CD8-positive, alpha-beta T cell (primary cell): ENCODE measurements at regions of chr6 and their contacts with region 1.

Region 1: GRCh38 chr6:42984001-42984923 is at the start of gene PPP2R5D:
- DNase-seq: peak; percentile 93 to 99 (median 96)
- ATAC-seq: peak; percentile 93
- H3K4me3 ChIP-seq: peak within 1 kb of the TSS; percentile 81 to 86
- H3K4me3 Mint-ChIP-seq: peak within 1 kb of the TSS; percentile 94
- H3K27ac ChIP-seq: peak within 1 kb of the TSS; percentile 78 to 86
- H3K27ac Mint-ChIP-seq: peak within 1 kb of the TSS; percentile 95
- H3K4me1 ChIP-seq: peaks cover 44% of the 10 kb centered on the region
- H3K4me1 Mint-ChIP-seq: peaks cover 62% of the 10 kb centered on the region
- H3K27me3 ChIP-seq: no peaks in the 10 kb centered on the region
- H3K27me3 Mint-ChIP-seq: no peaks in the 10 kb centered on the region
- CTCF ChIP-seq: no peak
- total RNA-seq, gene PPP2R5D: 14.1 to 19.5 TPM

Region 2: DNA sequence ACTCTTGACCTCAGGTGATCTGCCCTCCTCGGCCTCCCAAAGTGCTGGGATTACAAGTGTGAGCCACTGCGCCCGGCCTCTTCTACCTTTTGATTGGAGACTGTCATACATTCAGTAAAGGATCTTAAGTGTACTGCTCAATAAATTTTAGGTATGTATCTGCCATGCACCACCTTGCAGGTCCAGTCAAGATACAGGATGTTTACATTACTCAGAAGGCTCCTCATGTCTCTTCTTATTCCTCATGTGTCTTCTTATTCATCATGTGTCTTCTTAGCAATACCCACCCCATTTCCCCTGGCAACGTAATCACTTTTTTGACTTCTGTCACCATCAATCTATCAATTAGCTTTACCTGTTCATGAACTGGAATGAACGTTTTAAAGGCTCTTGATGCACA is 21.6 kb after region 1 on chr6:
- CTCF ChIA-PET with region 1: interaction called, 3 read pairs
- POLR2A ChIA-PET with region 1: interaction called, 17 read pairs
- intact Hi-C with region 1: no loop called
- DNase-seq: no peak
- ATAC-seq: no peak
- H3K4me3 ChIP-seq: no peak overlapping the region
- H3K4me3 Mint-ChIP-seq: no peak overlapping the region
- H3K27ac ChIP-seq: no peak overlapping the region
- H3K27ac Mint-ChIP-seq: no peak overlapping the region
- H3K4me1 ChIP-seq: no peaks in the 10 kb centered on the region
- H3K4me1 Mint-ChIP-seq: peaks cover 3% of the 10 kb centered on the region
- H3K27me3 ChIP-seq: no peaks in the 10 kb centered on the region
- H3K27me3 Mint-ChIP-seq: no peaks in the 10 kb centered on the region
- CTCF ChIP-seq: no peak

Region 3: DNA sequence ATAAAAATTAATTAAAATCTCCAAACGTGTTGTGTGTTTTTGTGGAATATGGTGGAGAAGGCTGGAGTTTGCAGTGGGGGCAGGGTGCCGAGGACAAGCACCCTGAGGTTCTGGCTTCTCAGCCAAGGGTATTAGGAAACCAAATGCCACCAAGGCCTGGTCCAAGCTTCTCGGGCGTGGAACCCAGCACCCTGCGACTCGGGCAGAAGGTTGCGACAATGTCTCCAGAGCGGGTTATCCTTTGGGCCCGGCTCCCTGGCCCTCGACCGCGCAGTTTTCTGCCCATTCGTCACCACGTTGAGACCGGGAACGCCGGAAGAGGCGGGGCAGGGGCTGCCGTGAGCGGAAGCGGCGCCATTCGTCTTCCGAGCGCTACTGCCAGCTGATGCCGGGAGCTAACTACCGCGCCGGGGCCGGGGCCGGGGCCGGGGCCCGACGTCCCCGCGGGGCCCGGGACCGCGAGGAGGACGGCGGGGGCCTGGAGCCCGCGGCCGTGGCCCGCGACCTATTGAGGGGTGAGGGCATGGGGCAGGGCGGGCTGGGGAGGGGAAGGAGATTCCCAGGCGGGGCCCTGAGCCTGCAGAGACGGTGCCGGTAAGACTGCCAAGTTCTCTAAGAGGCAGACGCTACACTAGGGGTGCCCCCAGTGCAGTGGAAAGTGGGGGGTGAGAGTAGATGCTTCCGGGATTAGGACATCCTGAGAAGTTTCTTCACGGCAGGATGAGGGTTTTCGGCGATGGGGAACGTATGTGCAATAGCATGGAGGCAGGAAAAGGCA is 37.2 kb after region 1 on chr6 and contains the start of gene RRP36:
- CTCF ChIA-PET with region 1: no interaction called
- POLR2A ChIA-PET with region 1: interaction called, 15 read pairs
- intact Hi-C with region 1: no loop called
- DNase-seq: peak in 8 of 9 experiments; percentile 54 to 81 (median 72)
- ATAC-seq: peak; percentile 78
- H3K4me3 ChIP-seq: peak within 1 kb of the TSS; percentile 93 to 94
- H3K4me3 Mint-ChIP-seq: peak within 1 kb of the TSS; percentile 99
- H3K27ac ChIP-seq: peak within 1 kb of the TSS; percentile 78 to 83
- H3K27ac Mint-ChIP-seq: peak within 1 kb of the TSS; percentile 96
- H3K4me1 ChIP-seq: peaks cover 21% of the 10 kb centered on the region
- H3K4me1 Mint-ChIP-seq: peaks cover 44% of the 10 kb centered on the region
- H3K27me3 ChIP-seq: no peaks in the 10 kb centered on the region
- H3K27me3 Mint-ChIP-seq: no peaks in the 10 kb centered on the region
- CTCF ChIP-seq: no peak
- total RNA-seq, gene RRP36: 20.1 to 20.2 TPM

Region 4: DNA sequence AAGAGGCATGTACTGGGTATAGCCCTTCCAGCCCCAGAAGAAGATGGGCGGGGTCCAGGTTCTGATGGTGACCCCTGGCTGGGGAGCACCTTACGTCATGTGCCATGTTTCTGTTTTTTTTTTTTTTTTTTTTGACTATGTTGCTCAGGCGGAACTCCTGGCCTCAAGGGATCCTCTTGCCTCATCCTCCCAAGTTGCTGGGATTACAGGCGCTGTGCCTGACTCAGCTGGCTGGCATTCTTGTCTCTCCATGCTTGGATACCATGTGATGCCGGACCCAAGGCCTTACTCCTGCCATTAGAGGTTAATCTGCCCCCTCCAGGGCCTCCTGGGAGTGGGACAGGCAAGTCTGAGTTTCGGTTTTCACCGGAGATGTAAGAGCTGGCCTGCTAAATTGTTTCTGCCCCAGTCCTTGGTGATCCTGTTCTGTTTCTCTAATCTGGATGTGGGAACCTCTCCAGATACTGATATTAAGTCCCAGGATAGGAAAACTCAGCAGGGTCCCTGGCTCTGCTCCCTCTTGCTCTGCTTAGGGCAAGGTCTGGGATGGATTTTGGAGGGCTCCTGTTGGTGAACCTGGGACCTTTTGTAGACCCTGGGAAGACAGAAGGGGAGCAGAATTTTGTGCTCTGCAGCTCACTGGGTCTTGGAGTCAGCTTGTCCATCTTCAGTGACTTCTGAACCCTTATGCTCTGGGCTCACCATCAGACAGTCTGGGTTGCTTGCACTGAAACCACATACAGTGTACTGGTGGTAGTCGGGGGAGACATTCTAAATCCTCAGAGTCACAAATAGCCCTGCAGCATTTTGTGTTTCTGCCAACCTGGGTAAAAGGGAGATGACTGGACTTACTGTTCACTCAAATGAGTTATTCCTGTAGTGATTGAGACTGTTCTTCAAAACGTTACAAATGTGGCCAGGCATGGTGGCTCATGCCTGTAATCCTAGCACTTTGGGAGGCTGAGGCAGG is 137.0 kb after region 1 on chr6:
- CTCF ChIA-PET with region 1: no interaction called
- POLR2A ChIA-PET with region 1: no interaction called
- intact Hi-C with region 1: no loop called
- DNase-seq: no peak
- ATAC-seq: no peak
- H3K4me3 ChIP-seq: no peak overlapping the region
- H3K4me3 Mint-ChIP-seq: no peak overlapping the region
- H3K27ac ChIP-seq: no peak overlapping the region
- H3K27ac Mint-ChIP-seq: no peak overlapping the region
- H3K4me1 ChIP-seq: no peaks in the 10 kb centered on the region
- H3K4me1 Mint-ChIP-seq: no peaks in the 10 kb centered on the region
- H3K27me3 ChIP-seq: no peaks in the 10 kb centered on the region
- H3K27me3 Mint-ChIP-seq: no peaks in the 10 kb centered on the region
- CTCF ChIP-seq: no peak

Region 5: DNA sequence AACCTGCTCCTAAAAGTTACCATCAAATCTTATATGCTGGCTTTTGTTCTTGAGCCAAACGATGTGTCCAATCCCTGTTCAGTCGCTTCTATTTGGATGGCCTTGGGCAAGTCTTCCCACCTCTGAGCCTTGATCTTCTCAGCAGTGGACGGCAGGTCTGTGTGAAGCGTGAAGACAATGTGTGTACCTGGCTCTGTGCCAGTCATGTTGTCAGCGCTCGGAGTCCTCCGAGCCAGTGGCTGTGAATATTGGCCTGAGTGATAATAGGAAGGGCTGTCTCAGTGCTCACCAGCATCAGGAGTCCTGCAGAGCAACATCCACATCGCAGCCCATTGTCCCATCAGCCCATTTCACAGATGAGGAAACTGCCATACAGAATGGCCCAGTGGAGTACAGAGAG is 1622.2 kb after region 1 on chr6:
- CTCF ChIA-PET with region 1: no interaction called
- POLR2A ChIA-PET with region 1: no interaction called
- intact Hi-C with region 1: no loop called
- DNase-seq: no peak
- ATAC-seq: no peak
- H3K4me3 ChIP-seq: no peak overlapping the region
- H3K4me3 Mint-ChIP-seq: no peak overlapping the region
- H3K27ac ChIP-seq: no peak overlapping the region
- H3K27ac Mint-ChIP-seq: no peak overlapping the region
- H3K4me1 ChIP-seq: no peaks in the 10 kb centered on the region
- H3K4me1 Mint-ChIP-seq: no peaks in the 10 kb centered on the region
- H3K27me3 ChIP-seq: no peaks in the 10 kb centered on the region
- H3K27me3 Mint-ChIP-seq: no peaks in the 10 kb centered on the region
- CTCF ChIP-seq: no peak